ENCODE measurements at regions of chr21 and their contacts with region 1.

Region 1: DNA sequence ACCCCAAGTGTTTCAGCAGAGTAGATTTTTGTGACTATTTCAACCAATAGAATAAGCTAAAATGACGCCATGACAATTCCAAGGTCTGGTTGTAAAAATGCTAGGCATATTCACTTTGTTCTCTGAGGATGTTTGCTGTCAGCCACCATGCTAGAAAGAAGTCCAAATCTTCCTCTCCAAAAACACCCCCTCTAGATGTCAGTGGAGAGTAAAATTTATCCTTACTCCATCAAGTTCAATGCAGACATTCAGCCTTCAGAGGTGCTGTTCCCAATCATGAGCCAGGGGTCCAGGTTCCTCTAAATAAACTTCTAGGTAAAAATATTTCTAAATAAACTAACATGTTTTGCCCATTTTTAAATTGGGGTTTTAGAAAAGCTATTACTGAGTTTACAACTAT is 395.4 kb upstream of the ADAMTS5 start:
- DNase-seq: no peak
- ATAC-seq: no peak

Region 2: DNA sequence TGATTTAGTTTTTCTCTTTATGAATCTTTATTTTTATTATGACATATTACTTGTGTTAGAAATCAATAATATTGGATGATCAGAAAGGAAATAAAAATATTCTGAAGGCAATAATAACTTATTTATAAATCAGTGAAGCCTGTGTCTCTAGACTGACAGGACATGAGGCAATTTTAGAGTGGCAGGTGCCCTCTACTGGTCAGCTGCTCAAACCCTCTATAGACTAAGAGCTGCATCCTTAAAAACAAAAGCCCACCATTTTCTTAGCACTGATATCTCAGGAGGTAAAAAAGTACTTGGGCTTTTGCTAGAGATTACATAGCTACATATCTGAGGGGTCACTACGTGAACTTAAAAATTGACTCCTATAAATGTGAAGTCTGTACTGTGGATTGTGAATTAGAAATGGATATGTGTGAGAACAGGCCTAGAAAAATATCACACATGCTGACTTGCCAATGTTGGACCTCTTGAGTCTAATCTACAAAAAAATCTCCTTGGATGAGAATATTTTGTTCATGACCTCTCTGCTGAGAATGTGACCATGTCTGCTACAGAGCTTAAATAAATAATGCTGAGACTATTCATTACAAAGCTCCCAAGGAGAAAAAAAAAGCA is 202.5 kb after region 1 on chr21:
- intact Hi-C with region 1: loop called in 1 of 2 experiments (anchors 5 kb)
- DNase-seq: peak; percentile 37
- ATAC-seq: peak; percentile 61 to 70